ENCODE measurements at regions of chr5 and their contacts with region 1.

Region 1: GRCh38 chr5:57298295-57298984 is 124.6 kb downstream of the GPBP1 start:
- DNase-seq: peak; percentile 89
- H3K4me3 Mint-ChIP-seq: no peak overlapping the region
- H3K27ac Mint-ChIP-seq: no peak overlapping the region
- H3K4me1 Mint-ChIP-seq: peaks cover 21% of the 10 kb centered on the region
- H3K27me3 Mint-ChIP-seq: no peaks in the 10 kb centered on the region
- CTCF ChIP-seq: peak; percentile 65

Region 2: GRCh38 chr5:57316798-57317327 is 18.4 kb after region 1 on chr5:
- CTCF ChIA-PET with region 1: interaction called, 11 read pairs
- POLR2A ChIA-PET with region 1: interaction called, 3 read pairs
- intact Hi-C with region 1: no loop called
- DNase-seq: peak; percentile 85
- H3K4me3 Mint-ChIP-seq: no peak overlapping the region
- H3K27ac Mint-ChIP-seq: no peak overlapping the region
- H3K4me1 Mint-ChIP-seq: peaks cover 6% of the 10 kb centered on the region
- H3K27me3 Mint-ChIP-seq: peaks cover 13% of the 10 kb centered on the region
- CTCF ChIP-seq: no peak

Region 3: GRCh38 chr5:57494104-57495098 is 196.0 kb after region 1 on chr5:
- CTCF ChIA-PET with region 1: interaction called, 108 read pairs
- POLR2A ChIA-PET with region 1: interaction called, 9 read pairs
- intact Hi-C with region 1: loop called (anchors 1 kb)
- DNase-seq: peak; percentile 99
- H3K4me3 Mint-ChIP-seq: peak overlapping the region; percentile 32
- H3K27ac Mint-ChIP-seq: peak overlapping the region; percentile 84
- H3K4me1 Mint-ChIP-seq: peaks cover 42% of the 10 kb centered on the region
- H3K27me3 Mint-ChIP-seq: no peaks in the 10 kb centered on the region
- CTCF ChIP-seq: no peak

Region 4: DNA sequence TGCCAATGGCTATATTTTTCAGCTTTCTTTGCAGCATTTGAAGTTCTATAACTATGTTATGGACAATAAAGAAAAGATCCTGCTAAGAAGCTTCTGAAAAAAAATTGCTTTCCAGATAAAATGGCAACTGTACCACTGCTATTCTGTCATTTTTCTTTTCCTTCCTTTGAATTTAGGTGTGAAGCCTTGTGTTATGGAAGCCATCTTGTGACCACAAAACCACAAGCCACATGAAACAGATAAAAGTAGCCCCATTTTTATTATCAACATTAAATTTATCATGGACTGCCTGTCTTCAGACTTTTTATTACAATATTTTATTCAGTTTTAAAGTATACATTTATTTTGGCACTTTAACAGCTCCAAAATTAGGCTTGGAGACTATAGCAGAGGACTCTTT is 474.1 kb after region 1 on chr5:
- CTCF ChIA-PET with region 1: interaction called, 62 read pairs
- POLR2A ChIA-PET with region 1: no interaction called
- intact Hi-C with region 1: no loop called
- DNase-seq: no peak
- H3K4me3 Mint-ChIP-seq: no peak overlapping the region
- H3K27ac Mint-ChIP-seq: no peak overlapping the region
- H3K4me1 Mint-ChIP-seq: no peaks in the 10 kb centered on the region
- H3K27me3 Mint-ChIP-seq: no peaks in the 10 kb centered on the region
- CTCF ChIP-seq: no peak

Region 5: DNA sequence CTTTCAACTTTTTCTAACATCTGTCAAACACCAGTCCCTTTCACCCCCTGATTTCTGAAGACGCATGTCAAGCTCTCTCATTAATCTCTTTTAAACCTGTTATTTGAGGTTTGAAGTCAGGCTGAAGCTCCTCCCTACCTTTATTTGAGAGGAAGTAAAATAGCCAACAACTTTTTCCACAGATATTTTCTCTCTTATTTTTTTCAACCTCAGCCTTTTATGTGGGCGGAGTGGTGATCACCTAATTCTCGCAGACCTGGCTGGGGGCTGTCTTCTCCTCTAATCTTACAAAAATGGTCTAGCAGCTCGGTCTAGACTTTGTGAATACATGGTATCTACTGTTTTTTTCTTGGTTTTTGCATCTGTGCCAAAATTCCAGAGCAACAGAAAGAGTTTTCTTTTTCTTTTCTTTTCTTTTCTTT is 579.9 kb after region 1 on chr5:
- CTCF ChIA-PET with region 1: interaction called, 10 read pairs
- POLR2A ChIA-PET with region 1: no interaction called
- intact Hi-C with region 1: no loop called
- DNase-seq: no peak
- H3K4me3 Mint-ChIP-seq: no peak overlapping the region
- H3K27ac Mint-ChIP-seq: no peak overlapping the region
- H3K4me1 Mint-ChIP-seq: no peaks in the 10 kb centered on the region
- H3K27me3 Mint-ChIP-seq: no peaks in the 10 kb centered on the region
- CTCF ChIP-seq: no peak

Region 6: DNA sequence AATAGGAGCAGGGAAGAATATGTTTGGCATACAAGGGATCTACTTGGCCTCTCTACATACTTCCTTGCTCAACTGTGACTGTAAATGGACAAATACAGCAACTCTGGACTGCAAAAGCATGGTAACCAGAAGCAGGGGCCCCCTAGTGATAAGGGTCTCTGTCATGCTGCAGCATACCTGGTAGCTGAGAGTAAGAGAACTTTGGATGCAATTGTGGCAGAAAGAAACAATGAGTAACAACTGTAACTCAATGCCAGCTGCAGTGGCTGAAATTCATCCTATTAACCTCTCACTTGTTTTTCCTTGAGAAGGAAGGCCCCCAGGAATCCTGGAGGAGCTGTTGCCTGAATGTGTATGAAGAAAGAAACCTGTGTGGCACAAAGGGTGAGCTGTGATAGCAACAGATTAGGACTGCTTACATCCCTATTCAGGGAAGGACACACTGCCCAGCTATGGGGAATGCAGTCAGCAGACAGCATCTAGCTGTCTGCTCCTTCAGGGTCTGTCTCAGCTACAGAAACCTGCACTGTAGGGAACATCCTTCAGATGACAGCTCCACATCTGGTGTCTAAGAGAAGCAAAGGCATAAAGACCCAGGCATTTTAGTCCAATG is 652.3 kb after region 1 on chr5:
- CTCF ChIA-PET with region 1: no interaction called
- POLR2A ChIA-PET with region 1: no interaction called
- intact Hi-C with region 1: no loop called
- DNase-seq: no peak
- H3K4me3 Mint-ChIP-seq: no peak overlapping the region
- H3K27ac Mint-ChIP-seq: no peak overlapping the region
- H3K4me1 Mint-ChIP-seq: no peaks in the 10 kb centered on the region
- H3K27me3 Mint-ChIP-seq: no peaks in the 10 kb centered on the region
- CTCF ChIP-seq: no peak

Measured in MCF 10A (cell line).